Endothelial cell of umbilical vein (primary cell): ENCODE measurements at regions of chr17 and their contacts with region 1.

Region 1: DNA sequence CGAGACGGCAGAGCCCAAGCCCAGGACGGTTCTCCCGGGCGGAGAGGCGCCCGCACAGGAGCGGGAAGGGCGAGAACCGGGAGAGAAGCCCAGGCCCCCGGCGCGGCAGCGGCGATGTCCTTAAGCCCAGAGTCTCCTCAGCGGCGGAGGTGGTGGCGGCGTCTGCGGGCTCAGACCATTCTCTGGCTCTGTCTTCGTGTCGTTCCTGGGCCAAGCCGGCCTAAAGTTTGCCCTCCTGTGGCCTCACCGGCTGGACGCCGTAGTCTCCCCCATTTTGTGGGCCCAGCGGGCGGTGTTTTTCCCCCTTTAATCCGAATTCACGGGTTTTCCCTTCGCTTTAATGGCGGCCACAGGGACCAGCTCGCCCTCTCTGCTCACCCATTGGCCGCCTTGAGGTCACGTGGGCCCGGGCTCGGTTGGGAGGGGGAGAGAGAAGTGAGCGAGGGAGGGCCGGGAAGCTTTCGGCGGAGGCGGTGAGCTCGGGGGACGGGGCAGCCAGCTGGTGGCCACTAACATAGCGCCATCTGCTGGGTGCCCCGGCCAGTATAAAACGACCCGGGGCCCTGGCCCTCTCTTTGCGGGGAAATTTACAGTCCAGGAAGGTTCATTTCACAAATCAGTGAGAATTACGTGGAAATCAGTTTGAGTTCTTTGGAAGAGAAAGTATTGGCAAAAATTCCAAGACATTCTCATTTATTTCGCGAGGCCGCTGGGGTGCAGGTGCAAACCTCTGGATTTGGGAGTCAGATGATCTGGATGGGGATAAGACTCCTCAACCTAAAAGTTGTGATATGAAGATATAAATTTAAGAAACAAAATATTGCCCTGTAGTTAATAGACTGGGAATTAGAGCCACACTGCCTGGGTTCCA is 755 bp upstream of the MED13 start:
- DNase-seq: peak; percentile 98
- H3K4me3 ChIP-seq: peak overlapping the region; percentile 68 to 100 (median 95)
- H3K27ac ChIP-seq: peak overlapping the region; percentile 98
- H3K4me1 ChIP-seq: peaks cover 19% of the 10 kb centered on the region
- H3K27me3 ChIP-seq: no peaks in the 10 kb centered on the region
- CTCF ChIP-seq: peak; percentile 93 to 94
- POLR2A ChIP-seq: peak; percentile 95

Region 2: GRCh38 chr17:61862975-61863800 is 202.6 kb before region 1 on chr17 and contains the start of gene BRIP1:
- CTCF ChIA-PET with region 1: interaction called, 6 read pairs
- POLR2A ChIA-PET with region 1: no interaction called
- dilution Hi-C with region 1: no loop called
- intact Hi-C with region 1: loop called (anchors 1 kb)
- DNase-seq: peak; percentile 95
- H3K4me3 ChIP-seq: peak within 1 kb of the TSS; percentile 83 to 97 (median 92)
- H3K27ac ChIP-seq: peak within 1 kb of the TSS; percentile 88
- H3K4me1 ChIP-seq: peaks cover 23% of the 10 kb centered on the region
- H3K27me3 ChIP-seq: no peaks in the 10 kb centered on the region
- CTCF ChIP-seq: no peak
- POLR2A ChIP-seq: peak; percentile 65
- total RNA-seq, gene BRIP1: 12.1 and 12.2 TPM in 2 replicates

Region 3: DNA sequence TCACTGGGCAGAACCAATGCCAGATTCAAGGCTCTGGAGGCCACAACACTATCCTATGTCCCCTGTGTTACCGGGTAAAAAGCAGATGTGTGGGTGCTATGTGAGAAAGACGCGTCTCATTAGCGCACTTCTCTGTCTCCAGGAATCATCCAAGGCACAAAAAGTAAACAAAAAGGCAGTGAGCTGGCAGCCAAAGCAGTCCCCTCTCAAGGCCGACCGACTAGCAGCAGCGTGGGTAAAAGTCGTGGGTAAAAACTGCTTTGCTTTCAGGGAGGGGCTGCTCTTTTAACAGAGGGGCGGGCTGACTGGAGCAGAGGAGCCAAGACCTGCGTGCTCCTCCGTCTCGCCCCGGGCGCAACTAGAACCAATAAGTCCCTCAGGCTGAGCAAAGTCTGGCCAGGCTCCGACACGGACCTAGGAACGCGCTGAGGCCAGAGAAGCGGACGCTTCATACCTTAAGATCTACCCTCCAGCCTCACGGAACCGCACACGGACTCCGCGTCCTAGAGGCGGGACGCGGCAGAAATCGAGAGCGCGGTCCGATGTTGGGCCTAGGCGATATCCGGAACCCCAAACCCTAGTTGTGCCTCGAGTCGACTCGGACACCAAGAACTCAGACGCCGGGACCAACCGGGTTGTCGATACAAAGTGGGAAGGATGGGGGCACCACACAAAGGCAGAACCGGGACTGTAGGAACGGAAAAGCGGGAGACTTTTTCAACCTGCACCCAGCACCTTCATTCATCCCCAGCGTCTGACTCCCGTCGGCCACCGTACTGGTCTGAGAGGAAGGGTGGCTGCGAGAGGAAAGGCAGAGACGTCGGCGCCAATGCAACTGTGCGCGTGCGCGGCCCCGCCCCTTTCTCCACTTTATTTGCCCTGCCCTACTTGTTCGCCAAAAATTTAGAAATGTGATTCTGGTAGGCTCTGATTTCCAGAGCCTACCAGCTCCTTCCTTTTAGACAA is 138.3 kb before region 1 on chr17 and contains the start of gene INTS2:
- CTCF ChIA-PET with region 1: no interaction called
- POLR2A ChIA-PET with region 1: no interaction called
- dilution Hi-C with region 1: no loop called
- intact Hi-C with region 1: loop called (anchors 2 kb)
- DNase-seq: peak; percentile 92
- H3K4me3 ChIP-seq: peak within 1 kb of the TSS; percentile 46 to 80 (median 76)
- H3K27ac ChIP-seq: peak within 1 kb of the TSS; percentile 59
- H3K4me1 ChIP-seq: peaks cover 11% of the 10 kb centered on the region
- H3K27me3 ChIP-seq: no peaks in the 10 kb centered on the region
- CTCF ChIP-seq: no peak
- POLR2A ChIP-seq: peak; percentile 98
- total RNA-seq, gene INTS2: 13.4 and 14.4 TPM in 2 replicates

Region 4: GRCh38 chr17:62052757-62053338 is 13.0 kb before region 1 on chr17:
- CTCF ChIA-PET with region 1: interaction called, 13 read pairs
- POLR2A ChIA-PET with region 1: interaction called, 4 read pairs
- dilution Hi-C with region 1: no loop called
- intact Hi-C with region 1: no loop called
- DNase-seq: peak; percentile 36
- H3K4me3 ChIP-seq: no peak overlapping the region
- H3K27ac ChIP-seq: no peak overlapping the region
- H3K4me1 ChIP-seq: no peaks in the 10 kb centered on the region
- H3K27me3 ChIP-seq: no peaks in the 10 kb centered on the region
- CTCF ChIP-seq: no peak
- POLR2A ChIP-seq: no peak

Region 5: DNA sequence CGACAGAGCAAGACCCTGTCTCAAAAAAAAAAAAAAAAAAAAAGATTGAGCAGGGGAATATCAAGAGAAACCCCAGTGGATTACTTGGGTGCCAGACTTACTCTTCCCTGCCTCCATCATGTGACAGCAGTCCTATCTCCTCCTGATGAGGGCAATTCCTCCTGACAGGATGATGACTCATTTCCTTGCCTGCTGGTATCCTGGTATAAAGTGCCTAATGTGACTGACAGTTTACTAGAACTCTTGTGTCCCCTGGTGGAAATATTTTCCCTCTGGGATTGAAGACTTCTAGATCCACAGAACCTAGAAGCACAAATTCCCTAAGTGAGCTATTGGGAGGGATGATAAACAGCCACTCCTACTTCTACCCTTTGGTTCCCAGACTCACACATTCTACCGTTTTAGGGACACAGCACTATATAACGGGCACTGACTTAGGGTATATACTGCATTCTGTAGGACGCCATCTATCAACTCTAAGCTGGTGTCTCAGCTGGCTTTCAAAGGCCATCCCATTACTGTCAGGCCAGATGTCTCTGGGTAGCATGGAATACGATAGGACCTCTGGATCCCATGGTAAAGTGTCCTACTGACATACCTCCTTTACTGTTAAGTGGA is 113.8 kb after region 1 on chr17:
- CTCF ChIA-PET with region 1: interaction called, 3 read pairs
- POLR2A ChIA-PET with region 1: no interaction called
- dilution Hi-C with region 1: no loop called
- intact Hi-C with region 1: loop called (anchors 1 kb)
- DNase-seq: peak; percentile 80
- H3K4me3 ChIP-seq: no peak overlapping the region
- H3K27ac ChIP-seq: no peak overlapping the region
- H3K4me1 ChIP-seq: peaks cover 17% of the 10 kb centered on the region
- H3K27me3 ChIP-seq: no peaks in the 10 kb centered on the region
- CTCF ChIP-seq: peak; percentile 7 to 19
- POLR2A ChIP-seq: no peak

Region 6: DNA sequence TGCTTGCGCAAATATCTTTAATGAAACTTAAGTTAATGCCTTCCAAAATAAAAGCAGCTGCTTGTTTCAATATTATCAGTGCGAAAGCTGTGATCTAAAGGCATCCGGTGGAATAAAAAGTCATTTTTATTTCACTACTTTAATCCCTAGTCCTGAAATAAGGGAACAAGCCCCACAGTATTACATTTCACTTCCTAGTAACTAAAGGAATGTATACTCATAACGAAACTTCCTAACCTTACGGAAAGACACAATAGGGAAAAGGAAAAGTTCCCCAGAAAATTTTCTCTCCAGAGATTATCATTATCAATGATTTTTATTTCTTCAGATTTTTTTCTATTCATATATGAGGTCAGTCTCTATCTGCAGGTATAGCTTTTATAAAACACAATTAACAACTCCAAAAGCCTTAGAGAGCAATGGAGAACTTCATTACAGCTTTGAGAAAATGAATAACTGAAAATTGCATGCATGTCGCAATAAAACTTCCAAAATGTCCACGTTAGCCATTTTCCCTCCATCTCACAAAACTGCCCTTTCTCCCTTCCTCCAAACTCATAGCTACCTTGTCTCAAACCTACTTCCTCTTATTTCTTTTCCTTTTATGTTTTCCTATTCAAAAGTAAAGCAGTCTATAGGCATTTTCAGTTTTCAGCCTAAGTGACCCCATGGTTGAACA is 153.5 kb after region 1 on chr17:
- CTCF ChIA-PET with region 1: no interaction called
- POLR2A ChIA-PET with region 1: no interaction called
- dilution Hi-C with region 1: no loop called
- intact Hi-C with region 1: loop called (anchors 10 kb)
- DNase-seq: no peak
- H3K4me3 ChIP-seq: no peak overlapping the region
- H3K27ac ChIP-seq: no peak overlapping the region
- H3K4me1 ChIP-seq: no peaks in the 10 kb centered on the region
- H3K27me3 ChIP-seq: no peaks in the 10 kb centered on the region
- CTCF ChIP-seq: no peak
- POLR2A ChIP-seq: no peak